HepG2 (cell line): ENCODE measurements at regions of chr2 and their contacts with region 1.

Region 1: GRCh38 chr2:65056215-65057053 is at the start of gene CEP68:
- DNase-seq: peak; percentile 98
- ATAC-seq: peak; percentile 94
- H3K4me3 ChIP-seq: peak within 1 kb of the TSS; percentile 78 to 88 (median 83)
- H3K27ac ChIP-seq: peak within 1 kb of the TSS; percentile 71
- H3K4me1 ChIP-seq: peaks cover 71% of the 10 kb centered on the region
- H3K27me3 ChIP-seq: no peaks in the 10 kb centered on the region; a peak in 1 of 5 replicates
- CTCF ChIP-seq: 0 out of 2 replicates have a peak, but pooled peaks have one; percentile 12
- EP300 ChIP-seq: no peak
- POLR2A ChIP-seq: peak; percentile 96 to 99
- RAD21 ChIP-seq: peak; percentile 67; the same call in 1 of the 2 replicates
- total RNA-seq, gene CEP68: 5.7 TPM in 2 replicates

Region 2: DNA sequence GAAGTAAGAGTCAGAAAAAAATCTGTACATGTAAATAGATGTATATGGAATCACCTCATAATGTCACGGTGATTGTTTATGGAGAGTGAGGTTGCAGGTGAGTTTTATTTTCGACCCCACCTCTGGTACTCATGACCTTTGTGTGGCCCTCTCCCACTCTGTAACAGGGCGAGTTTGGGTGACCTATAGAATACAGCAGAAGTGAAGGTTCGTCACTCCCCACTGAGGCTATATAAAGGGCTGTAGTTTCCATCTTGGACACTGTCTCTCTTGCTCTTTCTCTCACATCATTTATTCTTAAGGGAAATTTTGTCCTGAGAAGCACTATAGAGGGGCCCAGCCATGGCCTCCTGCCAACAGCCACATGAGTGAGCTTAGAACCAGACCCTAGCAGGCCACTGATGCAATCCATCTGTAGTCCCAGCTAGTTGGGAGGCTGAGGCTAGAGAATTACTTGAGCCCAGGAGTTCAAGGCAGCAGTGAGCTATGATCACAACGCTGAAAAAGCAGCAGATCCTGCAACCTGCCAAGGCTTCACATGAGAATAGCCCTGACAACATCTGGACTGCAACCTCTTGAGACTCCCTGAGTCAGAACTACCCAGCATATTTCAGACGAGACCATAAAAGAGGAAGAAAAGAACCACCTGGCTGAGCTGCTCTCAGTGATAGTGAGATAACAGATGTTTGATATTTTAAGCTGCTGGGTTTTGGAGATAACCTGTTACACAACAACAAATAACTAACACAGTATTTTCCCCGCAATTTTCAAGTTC is 141.5 kb before region 1 on chr2:
- CTCF ChIA-PET with region 1: no interaction called
- POLR2A ChIA-PET with region 1: interaction called, 11 read pairs
- in situ Hi-C with region 1: no loop called
- intact Hi-C with region 1: no loop called
- DNase-seq: no peak
- ATAC-seq: no peak
- H3K4me3 ChIP-seq: no peak overlapping the region
- H3K27ac ChIP-seq: no peak overlapping the region
- H3K4me1 ChIP-seq: peaks cover 6% of the 10 kb centered on the region; the same call in 1 of the 2 replicates
- H3K27me3 ChIP-seq: 0 out of 5 replicates have a peak, but pooled peaks cover 0 to 4% of the 10 kb centered on the region in 2 experiments
- CTCF ChIP-seq: no peak
- EP300 ChIP-seq: no peak
- POLR2A ChIP-seq: no peak
- RAD21 ChIP-seq: no peak

Region 3: DNA sequence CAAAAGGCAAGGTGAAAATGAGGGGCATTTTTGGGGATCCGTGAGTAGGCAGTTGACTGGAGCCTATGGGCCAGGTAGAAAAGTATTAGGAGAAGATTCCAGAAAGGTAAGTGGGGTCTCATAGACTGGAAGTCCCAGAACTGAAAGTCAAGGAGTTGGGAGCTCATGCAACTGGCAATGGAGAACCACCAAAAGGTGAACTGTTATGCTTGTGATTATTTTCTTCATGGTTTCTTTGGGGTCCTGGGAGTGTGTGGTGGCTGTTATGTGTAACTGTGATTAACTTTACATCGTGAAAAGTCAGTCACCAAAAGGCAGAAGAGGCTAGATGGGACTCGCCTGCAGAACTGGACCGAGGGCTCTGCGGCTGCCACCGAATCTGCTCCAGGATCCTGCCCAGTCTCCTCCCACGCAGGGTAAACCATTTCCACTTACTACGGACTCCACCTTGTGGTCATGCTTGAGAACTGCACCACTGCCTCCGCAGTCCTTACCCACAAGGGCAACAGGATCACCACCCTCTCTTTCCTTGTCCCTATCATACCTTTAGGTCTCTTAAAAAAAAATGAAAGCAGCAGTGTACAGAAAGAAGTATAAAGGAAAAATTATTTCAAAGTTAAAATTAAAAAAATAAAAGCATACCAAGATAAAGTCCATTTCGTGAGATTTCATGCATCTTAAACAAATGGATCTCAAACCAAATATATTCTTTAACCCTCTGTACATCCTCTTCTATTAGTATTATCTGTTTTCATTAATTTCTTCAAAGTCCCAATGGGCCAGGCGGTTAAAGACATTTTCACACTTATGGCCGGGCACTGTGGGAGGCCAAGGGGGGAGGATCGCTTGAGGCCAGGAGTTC is 15.8 kb before region 1 on chr2:
- CTCF ChIA-PET with region 1: no interaction called
- POLR2A ChIA-PET with region 1: interaction called, 16 read pairs
- in situ Hi-C with region 1: no loop called
- intact Hi-C with region 1: no loop called
- DNase-seq: peak; percentile 83
- ATAC-seq: peak; percentile 98
- H3K4me3 ChIP-seq: no peak overlapping the region
- H3K27ac ChIP-seq: no peak overlapping the region
- H3K4me1 ChIP-seq: peaks cover 13% of the 10 kb centered on the region
- H3K27me3 ChIP-seq: no peaks in the 10 kb centered on the region
- CTCF ChIP-seq: peak; percentile 97
- EP300 ChIP-seq: no peak
- POLR2A ChIP-seq: no peak
- RAD21 ChIP-seq: peak; percentile 92

Region 4: GRCh38 chr2:65075605-65076344 is 19.3 kb after region 1 on chr2:
- CTCF ChIA-PET with region 1: no interaction called
- POLR2A ChIA-PET with region 1: interaction called, 35 read pairs
- in situ Hi-C with region 1: no loop called
- intact Hi-C with region 1: no loop called
- DNase-seq: peak; percentile 30
- ATAC-seq: peak; percentile 44
- H3K4me3 ChIP-seq: no peak overlapping the region
- H3K27ac ChIP-seq: no peak overlapping the region
- H3K4me1 ChIP-seq: peaks cover 23% of the 10 kb centered on the region
- H3K27me3 ChIP-seq: no peaks in the 10 kb centered on the region
- CTCF ChIP-seq: no peak
- EP300 ChIP-seq: no peak
- POLR2A ChIP-seq: no peak; a peak in 2 of 4 replicates
- RAD21 ChIP-seq: no peak

Region 5: GRCh38 chr2:65227425-65228262 is 171.2 kb after region 1 on chr2 and contains the start of gene ACTR2:
- CTCF ChIA-PET with region 1: no interaction called
- POLR2A ChIA-PET with region 1: interaction called, 12 read pairs
- in situ Hi-C with region 1: no loop called
- intact Hi-C with region 1: no loop called
- DNase-seq: peak; percentile 95
- ATAC-seq: peak; percentile 97
- H3K4me3 ChIP-seq: peak within 1 kb of the TSS; percentile 76 to 99 (median 98)
- H3K27ac ChIP-seq: peak within 1 kb of the TSS; percentile 94
- H3K4me1 ChIP-seq: peaks cover 44% of the 10 kb centered on the region
- H3K27me3 ChIP-seq: peaks cover 0 to 3% of the 10 kb centered on the region in 2 experiments; a peak in 1 of 5 replicates
- CTCF ChIP-seq: peak; percentile 13; the same call in 1 of the 2 replicates
- EP300 ChIP-seq: peak in 1 of 2 experiments; percentile 29; a peak in 1 of 4 replicates
- POLR2A ChIP-seq: peak; percentile 90 to 95
- RAD21 ChIP-seq: peak; percentile 66
- total RNA-seq, gene ACTR2: 100 and 211 TPM in 2 replicates